ENCODE measurements at regions of chr17 and their contacts with region 1.

Region 1: GRCh38 chr17:36148559-36149295 is 27.7 kb downstream of the TBC1D3B start:
- DNase-seq: peak; percentile 75
- H3K4me3 ChIP-seq: no peak overlapping the region
- H3K27ac ChIP-seq: no peak overlapping the region
- H3K4me1 ChIP-seq: no peaks in the 10 kb centered on the region
- CTCF ChIP-seq: peak; percentile 100

Region 2: GRCh38 chr17:35969558-35970380 is 179.0 kb before region 1 on chr17:
- CTCF ChIA-PET with region 1: interaction called, 7 read pairs
- POLR2A ChIA-PET with region 1: interaction called, 3 read pairs
- intact Hi-C with region 1: loop called (anchors 1 kb)
- DNase-seq: peak; percentile 77
- H3K4me3 ChIP-seq: no peak overlapping the region
- H3K27ac ChIP-seq: no peak overlapping the region
- H3K4me1 ChIP-seq: no peaks in the 10 kb centered on the region
- CTCF ChIP-seq: peak; percentile 94

Region 3: GRCh38 chr17:36017799-36018198 is 130.9 kb before region 1 on chr17 and contains the start of gene CCL23:
- CTCF ChIA-PET with region 1: no interaction called
- POLR2A ChIA-PET with region 1: no interaction called
- intact Hi-C with region 1: no loop called
- DNase-seq: no peak
- H3K4me3 ChIP-seq: no peak within 1 kb of the TSS
- H3K27ac ChIP-seq: no peak within 1 kb of the TSS
- H3K4me1 ChIP-seq: no peaks in the 10 kb centered on the region
- CTCF ChIP-seq: no peak
- total RNA-seq, gene CCL23: not detected in 2 replicates

Region 4: GRCh38 chr17:36055921-36056520 is 92.7 kb before region 1 on chr17:
- CTCF ChIA-PET with region 1: no interaction called
- POLR2A ChIA-PET with region 1: no interaction called
- intact Hi-C with region 1: no loop called
- DNase-seq: no peak
- H3K4me3 ChIP-seq: no peak overlapping the region
- H3K27ac ChIP-seq: no peak overlapping the region
- H3K4me1 ChIP-seq: no peaks in the 10 kb centered on the region
- CTCF ChIP-seq: no peak

Region 5: GRCh38 chr17:36072431-36073121 is 76.2 kb before region 1 on chr17:
- CTCF ChIA-PET with region 1: no interaction called
- POLR2A ChIA-PET with region 1: no interaction called
- intact Hi-C with region 1: loop called (anchors 1 kb)
- DNase-seq: peak; percentile 55
- H3K4me3 ChIP-seq: no peak overlapping the region
- H3K27ac ChIP-seq: no peak overlapping the region
- H3K4me1 ChIP-seq: no peaks in the 10 kb centered on the region
- CTCF ChIP-seq: peak; percentile 87

Region 6: DNA sequence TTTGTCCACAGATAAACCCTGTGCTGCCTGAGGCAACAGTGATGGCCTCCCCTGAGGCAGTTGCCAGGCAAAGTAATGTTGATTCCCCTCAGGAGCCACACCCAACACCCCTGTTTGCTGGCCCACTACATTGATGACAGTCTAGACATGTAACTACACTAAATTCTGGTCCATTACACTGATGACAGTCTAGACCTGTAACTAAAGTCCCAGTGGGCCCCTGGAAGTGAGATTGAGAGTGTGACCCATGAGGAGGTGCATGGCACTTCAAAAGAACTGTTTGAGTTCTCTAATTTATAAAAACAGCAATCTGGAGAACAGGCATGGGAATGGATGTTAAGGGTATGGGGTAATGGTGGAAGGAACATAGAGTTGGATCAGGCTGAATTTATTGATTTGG is 36.2 kb before region 1 on chr17:
- CTCF ChIA-PET with region 1: no interaction called
- POLR2A ChIA-PET with region 1: interaction called, 3 read pairs
- intact Hi-C with region 1: loop called (anchors 2 kb)
- DNase-seq: no peak
- H3K4me3 ChIP-seq: no peak overlapping the region
- H3K27ac ChIP-seq: no peak overlapping the region
- H3K4me1 ChIP-seq: no peaks in the 10 kb centered on the region
- CTCF ChIP-seq: no peak